ENCODE measurements at regions of chr20 and their contacts with region 1.

Region 1: DNA sequence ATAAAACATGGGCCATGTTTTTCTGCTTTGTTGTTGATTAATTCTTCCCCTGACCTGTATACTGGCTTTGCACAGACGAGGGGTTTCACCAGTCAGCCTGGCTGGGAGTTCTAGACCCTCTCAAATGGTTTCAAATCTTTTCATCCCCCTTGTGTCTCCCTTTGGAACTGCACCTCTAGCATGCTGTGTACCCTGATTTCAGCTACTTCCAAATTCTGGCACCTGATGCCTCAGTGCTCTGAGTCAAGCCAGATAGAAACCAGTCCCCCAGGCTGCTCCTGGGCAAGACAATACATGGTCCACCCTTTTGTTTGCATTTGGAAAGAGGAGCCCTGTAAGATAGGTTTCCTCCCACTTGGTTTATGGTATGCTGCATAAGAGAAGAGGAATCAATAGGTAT is 290.2 kb downstream of the BTBD3 start:
- DNase-seq: peak; percentile 41
- ATAC-seq: peak; percentile 85
- H3K4me3 ChIP-seq: no peak overlapping the region
- H3K27ac ChIP-seq: no peak overlapping the region
- H3K4me1 ChIP-seq: no peaks in the 10 kb centered on the region
- H3K27me3 ChIP-seq: no peaks in the 10 kb centered on the region
- CTCF ChIP-seq: peak; percentile 61
- POLR2A ChIP-seq: no peak
- RAD21 ChIP-seq: peak; percentile 67

Region 2: GRCh38 chr20:11012975-11013374 is 1194.9 kb before region 1 on chr20:
- CTCF ChIA-PET with region 1: no interaction called
- POLR2A ChIA-PET with region 1: no interaction called
- dilution Hi-C with region 1: no loop called
- in situ Hi-C with region 1: no loop called
- intact Hi-C with region 1: no loop called
- DNase-seq: peak; percentile 50
- ATAC-seq: no peak
- H3K4me3 ChIP-seq: no peak overlapping the region
- H3K27ac ChIP-seq: no peak overlapping the region
- H3K4me1 ChIP-seq: no peaks in the 10 kb centered on the region; the same call in 1 of the 2 replicates
- H3K27me3 ChIP-seq: no peaks in the 10 kb centered on the region; the same call in 1 of the 2 replicates
- CTCF ChIP-seq: no peak
- POLR2A ChIP-seq: no peak
- RAD21 ChIP-seq: no peak

Region 3: DNA sequence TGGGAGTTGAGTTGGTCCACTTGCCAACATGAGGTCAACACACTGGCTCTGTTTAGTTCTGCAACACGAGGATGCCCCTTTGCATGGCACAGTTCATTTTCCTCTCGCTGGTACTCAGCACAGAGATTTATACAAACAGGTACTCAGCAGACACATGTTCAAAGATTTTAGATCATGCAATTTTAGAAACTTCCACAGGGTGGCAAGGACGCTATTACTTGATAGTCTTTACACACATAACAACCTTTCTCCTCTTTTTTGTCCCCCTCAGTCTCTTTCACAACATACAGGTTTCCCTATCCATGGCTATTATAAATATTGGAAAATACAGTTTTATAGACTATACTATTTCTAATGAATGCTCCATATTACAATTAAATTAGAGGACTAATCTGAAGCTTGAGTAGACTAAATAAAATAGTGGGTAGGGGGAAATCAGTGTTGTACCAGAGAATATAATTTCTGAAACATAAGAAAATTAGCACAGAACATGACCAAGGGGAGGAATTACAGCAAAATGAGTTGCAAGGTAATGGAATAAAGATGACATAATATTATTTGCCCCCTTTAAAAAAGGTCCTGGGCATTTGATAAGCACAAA is 622.0 kb before region 1 on chr20:
- CTCF ChIA-PET with region 1: no interaction called
- POLR2A ChIA-PET with region 1: no interaction called
- dilution Hi-C with region 1: no loop called
- in situ Hi-C with region 1: no loop called
- intact Hi-C with region 1: loop called (anchors 10 kb)
- DNase-seq: peak; percentile 22
- ATAC-seq: peak; percentile 67; the same call in 1 of the 2 replicates
- H3K4me3 ChIP-seq: no peak overlapping the region
- H3K27ac ChIP-seq: no peak overlapping the region
- H3K4me1 ChIP-seq: no peaks in the 10 kb centered on the region
- H3K27me3 ChIP-seq: peaks cover 2% of the 10 kb centered on the region
- CTCF ChIP-seq: peak; percentile 40
- POLR2A ChIP-seq: no peak
- RAD21 ChIP-seq: peak; percentile 38

Region 4: GRCh38 chr20:11901127-11901526 is 306.7 kb before region 1 on chr20:
- CTCF ChIA-PET with region 1: interaction called, 3 read pairs
- POLR2A ChIA-PET with region 1: no interaction called
- dilution Hi-C with region 1: no loop called
- in situ Hi-C with region 1: no loop called
- intact Hi-C with region 1: loop called (anchors 10 kb)
- DNase-seq: peak; percentile 90
- ATAC-seq: peak; percentile 87
- H3K4me3 ChIP-seq: no peak overlapping the region
- H3K27ac ChIP-seq: no peak overlapping the region
- H3K4me1 ChIP-seq: peaks cover 6% of the 10 kb centered on the region
- H3K27me3 ChIP-seq: no peaks in the 10 kb centered on the region
- CTCF ChIP-seq: no peak
- POLR2A ChIP-seq: no peak
- RAD21 ChIP-seq: no peak

Region 5: DNA sequence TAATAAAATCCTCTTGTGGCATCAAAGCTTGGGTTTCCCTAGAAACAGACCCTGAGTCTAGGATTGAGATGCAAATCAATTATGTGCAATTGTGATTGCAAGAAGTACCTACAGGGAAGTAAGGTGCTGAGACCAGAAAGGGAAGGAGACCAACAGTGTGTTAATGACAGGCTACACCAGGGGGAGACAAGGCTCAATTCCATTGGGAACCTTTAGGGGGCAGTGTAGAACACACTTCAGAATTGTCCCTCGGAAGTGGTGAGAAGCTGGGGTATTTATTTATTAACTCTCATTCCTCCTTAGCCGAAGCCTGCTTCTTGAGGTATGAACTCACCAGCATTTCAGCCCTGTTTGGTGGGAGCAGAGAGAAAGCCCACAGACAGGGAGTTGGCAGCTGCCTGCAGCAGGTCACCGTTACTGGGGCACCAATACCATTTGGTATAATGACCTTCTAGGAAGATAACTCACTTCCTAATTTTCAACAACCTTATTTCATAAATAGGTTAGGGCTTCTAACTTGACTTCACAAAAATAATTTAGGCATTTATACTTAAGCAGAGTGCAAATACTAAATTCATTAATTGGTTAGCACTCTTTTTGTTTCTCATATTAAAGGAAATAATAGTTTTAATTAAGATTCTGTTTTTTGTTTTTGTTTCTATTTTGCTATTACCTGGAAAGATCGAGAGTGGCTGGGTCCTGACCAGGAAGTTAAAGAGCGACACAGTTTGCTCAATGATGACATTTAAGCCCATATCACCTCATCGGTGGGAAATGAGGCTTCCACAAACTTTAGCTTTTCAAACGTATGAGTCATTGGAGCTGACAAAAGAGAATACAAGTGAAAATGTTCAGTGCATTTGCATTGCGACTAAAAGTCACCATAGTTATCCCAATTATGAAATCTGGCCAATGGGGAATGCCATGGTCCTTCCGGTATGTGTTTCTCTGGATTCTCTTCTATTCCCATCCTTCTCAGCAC is 195.3 kb before region 1 on chr20:
- CTCF ChIA-PET with region 1: interaction called, 3 read pairs
- POLR2A ChIA-PET with region 1: no interaction called
- dilution Hi-C with region 1: no loop called
- in situ Hi-C with region 1: no loop called
- intact Hi-C with region 1: loop called (anchors 1 kb)
- DNase-seq: peak; percentile 52
- ATAC-seq: peak; percentile 79
- H3K4me3 ChIP-seq: no peak overlapping the region
- H3K27ac ChIP-seq: no peak overlapping the region
- H3K4me1 ChIP-seq: no peaks in the 10 kb centered on the region
- H3K27me3 ChIP-seq: no peaks in the 10 kb centered on the region; the same call in 1 of the 2 replicates
- CTCF ChIP-seq: peak; percentile 99
- POLR2A ChIP-seq: no peak
- RAD21 ChIP-seq: peak; percentile 73

Region 6: DNA sequence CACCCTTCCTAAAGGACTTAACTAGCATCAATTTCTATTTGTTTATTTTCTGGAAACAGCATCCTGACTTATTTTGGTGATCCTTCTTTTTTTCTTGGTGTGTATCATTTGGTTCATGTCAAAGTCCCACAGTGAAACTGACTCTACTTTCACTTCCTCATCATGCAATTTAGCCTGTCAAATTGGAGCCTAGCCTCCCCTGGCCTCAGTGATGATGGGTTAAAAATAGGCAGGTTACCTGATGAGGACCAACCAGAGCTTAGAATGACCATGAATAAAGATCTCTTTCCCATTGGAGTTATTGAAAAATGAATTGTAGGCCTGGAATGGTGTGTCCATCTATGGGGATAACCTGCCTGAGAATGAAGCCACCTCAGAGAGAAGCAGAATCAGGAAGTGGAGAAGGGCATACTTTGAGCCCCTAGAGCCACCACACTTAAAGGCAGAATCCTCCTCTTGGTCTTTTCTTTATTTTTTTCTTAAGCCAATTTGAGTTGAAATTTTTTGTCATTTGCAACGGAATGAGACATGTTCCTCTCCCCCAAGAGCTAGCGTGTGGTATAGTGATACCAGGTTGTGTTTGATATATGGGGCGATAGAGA is 184.6 kb before region 1 on chr20:
- CTCF ChIA-PET with region 1: no interaction called
- POLR2A ChIA-PET with region 1: no interaction called
- dilution Hi-C with region 1: no loop called
- in situ Hi-C with region 1: no loop called
- intact Hi-C with region 1: no loop called
- DNase-seq: no peak
- ATAC-seq: no peak
- H3K4me3 ChIP-seq: no peak overlapping the region
- H3K27ac ChIP-seq: no peak overlapping the region
- H3K4me1 ChIP-seq: no peaks in the 10 kb centered on the region
- H3K27me3 ChIP-seq: 0 out of 2 replicates have a peak, but pooled peaks cover 2% of the 10 kb centered on the region
- CTCF ChIP-seq: no peak
- POLR2A ChIP-seq: no peak
- RAD21 ChIP-seq: no peak